CD8-positive, alpha-beta memory T cell (primary cell): ENCODE measurements at regions of chr12 and their contacts with region 1.

Region 1: DNA sequence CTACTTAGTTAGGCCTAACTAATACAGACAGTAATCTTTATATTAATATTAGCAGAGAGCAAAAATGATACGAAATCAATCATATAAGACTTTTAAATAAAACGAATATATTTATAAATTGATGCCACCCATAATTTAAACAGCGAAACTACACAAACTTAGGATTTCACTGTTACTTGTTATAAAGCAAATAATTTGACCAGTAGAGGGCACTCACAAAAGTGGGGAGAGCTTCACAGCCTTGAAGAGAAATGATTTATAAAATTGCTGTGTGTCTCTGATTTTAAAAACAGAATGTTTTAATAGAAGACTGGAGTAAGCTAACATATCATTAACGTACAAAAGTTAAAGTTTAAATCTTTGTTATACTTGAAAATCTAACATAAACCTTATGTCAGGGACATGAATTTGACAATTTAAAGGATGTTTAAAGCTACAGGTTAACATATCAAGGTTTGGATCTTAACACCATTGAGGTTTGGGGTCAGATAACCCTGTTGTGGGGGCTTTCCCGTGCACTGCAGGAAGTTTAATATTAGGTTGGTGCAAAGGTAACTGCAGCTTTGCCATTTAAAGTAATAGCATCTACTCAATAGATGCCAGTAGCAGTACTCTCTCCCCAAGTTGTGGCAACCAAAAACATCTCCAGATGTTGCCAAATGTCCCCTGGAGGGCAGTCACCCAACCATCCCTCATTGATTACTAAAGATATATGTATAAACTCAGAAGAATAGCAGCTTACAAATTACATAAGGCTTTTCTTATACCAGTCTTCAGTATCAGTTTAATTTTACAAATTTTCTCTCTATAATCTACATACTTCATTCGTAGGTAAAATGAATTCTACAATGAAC is 9.3 kb downstream of the KRAS start:
- DNase-seq: peak; percentile 22 to 77 (median 69)
- H3K4me3 ChIP-seq: no peak overlapping the region
- H3K4me3 Mint-ChIP-seq: peak overlapping the region in 3 of 7 donors; percentile 14 to 34 (median 34)
- H3K27ac ChIP-seq: no peak overlapping the region
- H3K27ac Mint-ChIP-seq: peak overlapping the region; percentile 52 to 96 (median 86)
- H3K4me1 ChIP-seq: peaks cover 10% of the 10 kb centered on the region
- H3K4me1 Mint-ChIP-seq: peaks cover 33 to 90% (median 79%) of the 10 kb centered on the region in 3 donors
- H3K27me3 ChIP-seq: no peaks in the 10 kb centered on the region
- H3K27me3 Mint-ChIP-seq: no peaks in the 10 kb centered on the region

Region 2: DNA sequence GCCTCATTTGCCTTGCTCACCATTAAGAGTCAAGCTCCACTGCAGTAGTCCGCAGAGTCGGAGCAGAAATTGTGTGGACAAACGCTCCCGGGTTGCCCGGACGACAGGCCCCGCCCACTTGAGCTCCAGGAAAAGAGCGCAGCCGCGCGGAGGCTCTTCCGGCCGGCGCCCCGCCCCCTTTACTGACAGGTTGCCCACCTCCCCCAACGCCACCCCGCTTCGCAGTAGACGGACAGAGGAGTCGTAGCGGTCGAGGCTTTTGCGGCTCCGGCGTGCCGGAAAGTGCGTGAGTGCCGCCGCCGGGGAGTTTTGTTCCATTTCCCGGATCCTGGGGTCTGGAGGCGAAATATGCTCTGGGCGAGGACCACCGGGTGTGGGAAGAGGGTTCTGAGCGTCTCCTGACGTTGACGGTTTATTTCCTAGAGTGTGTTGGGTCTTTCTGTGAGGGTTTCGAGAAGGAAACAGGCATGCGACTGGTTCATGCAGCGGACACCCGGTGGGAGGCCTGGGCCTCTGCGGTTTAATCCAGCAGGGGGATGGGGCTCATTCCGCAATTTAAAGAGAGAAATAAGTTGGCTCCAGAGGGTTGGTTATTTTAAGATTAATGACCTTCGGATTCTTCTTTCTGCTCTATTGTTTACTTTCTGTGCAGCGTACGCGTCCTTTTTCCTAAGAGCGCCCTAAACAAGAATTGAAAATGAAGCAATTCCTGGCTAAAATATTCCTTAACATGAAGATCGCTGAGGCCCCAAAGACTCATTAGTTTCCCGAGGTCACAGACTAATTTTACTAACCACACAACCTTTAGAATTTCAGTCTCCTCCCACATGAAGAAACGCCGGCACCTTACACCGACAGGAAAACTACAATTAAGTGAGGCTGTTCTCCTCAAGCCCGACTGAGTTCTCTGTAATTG is 46.1 kb before region 1 on chr12 and contains the starts of genes DNAI7 and ETFRF1:
- CTCF ChIA-PET with region 1: interaction called, 3 read pairs
- POLR2A ChIA-PET with region 1: interaction called, 10 read pairs
- DNase-seq: peak; percentile 95 to 98 (median 96)
- H3K4me3 ChIP-seq: peak within 1 kb of the TSS; percentile 84
- H3K4me3 Mint-ChIP-seq: peak within 1 kb of the TSS; percentile 96 to 99 (median 97)
- H3K27ac ChIP-seq: peak within 1 kb of the TSS; percentile 95
- H3K27ac Mint-ChIP-seq: peak within 1 kb of the TSS; percentile 99 to 100 (median 99)
- H3K4me1 ChIP-seq: peaks cover 15% of the 10 kb centered on the region
- H3K4me1 Mint-ChIP-seq: peaks cover 31 to 54% (median 49%) of the 10 kb centered on the region in 3 donors
- H3K27me3 ChIP-seq: no peaks in the 10 kb centered on the region
- H3K27me3 Mint-ChIP-seq: peaks cover 0 to 6% of the 10 kb centered on the region in 2 donors
- total RNA-seq, gene DNAI7: not detected
- total RNA-seq, gene ETFRF1: 12.4 to 14.4 TPM

Region 3: DNA sequence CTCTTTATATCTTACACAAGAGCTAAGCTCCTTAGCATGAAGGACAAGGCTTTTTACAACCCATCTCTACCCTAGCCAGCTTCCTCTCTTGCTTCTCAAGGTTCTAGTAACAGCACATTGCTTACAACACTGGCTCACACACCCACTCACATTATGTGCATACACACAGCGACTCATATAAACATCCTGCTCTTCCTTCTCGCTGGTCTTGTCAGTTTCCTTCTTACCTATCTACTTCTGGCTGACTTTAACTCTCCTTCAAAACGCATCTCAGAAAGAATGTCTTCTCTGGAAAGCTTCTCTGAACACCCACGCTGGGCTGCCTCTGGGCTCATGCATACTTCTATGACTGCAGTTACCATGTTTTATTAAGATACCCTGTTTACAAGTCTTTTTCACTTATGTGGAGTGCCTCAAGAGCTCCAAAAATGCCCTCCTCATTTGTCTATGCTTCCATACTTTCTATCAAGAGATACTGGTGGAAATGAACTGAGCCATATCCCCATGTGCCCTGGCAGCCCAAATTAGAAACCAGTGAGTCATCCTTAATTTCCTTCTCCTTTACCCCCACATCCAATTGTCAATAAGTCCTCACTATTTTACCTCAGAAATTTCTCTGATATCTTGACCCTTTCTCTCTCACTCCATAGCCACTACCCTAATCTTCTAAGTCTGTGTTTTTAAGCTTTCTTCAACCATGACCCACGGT is 136.2 kb after region 1 on chr12:
- CTCF ChIA-PET with region 1: interaction called, 23 read pairs
- POLR2A ChIA-PET with region 1: interaction called, 3 read pairs
- DNase-seq: peak in 2 of 5 donors; percentile 31 to 60
- H3K4me3 ChIP-seq: peak overlapping the region; percentile 6
- H3K4me3 Mint-ChIP-seq: peak overlapping the region in 6 of 7 donors; percentile 25 to 73 (median 40)
- H3K27ac ChIP-seq: peak overlapping the region; percentile 26
- H3K27ac Mint-ChIP-seq: peak overlapping the region; percentile 16 to 95 (median 88)
- H3K4me1 ChIP-seq: peaks cover 32% of the 10 kb centered on the region
- H3K4me1 Mint-ChIP-seq: peaks cover 21 to 36% (median 27%) of the 10 kb centered on the region in 3 donors
- H3K27me3 ChIP-seq: no peaks in the 10 kb centered on the region
- H3K27me3 Mint-ChIP-seq: no peaks in the 10 kb centered on the region